PC-3 (cell line): ENCODE measurements at regions of chr13 and their contacts with region 1.

Region 1: GRCh38 chr13:48233046-48233907 is at the start of gene ITM2B:
- DNase-seq: peak; percentile 52
- ATAC-seq: peak; percentile 84
- H3K4me3 ChIP-seq: peak within 1 kb of the TSS; percentile 88
- H3K27ac ChIP-seq: peak within 1 kb of the TSS; percentile 32; the same call in 1 of the 2 replicates
- H3K4me1 ChIP-seq: peaks cover 32% of the 10 kb centered on the region
- H3K27me3 ChIP-seq: no peaks in the 10 kb centered on the region
- CTCF ChIP-seq: peak; percentile 45; the same call in 1 of the 2 replicates
- total RNA-seq, gene ITM2B: 74.6 and 105 TPM in 2 replicates

Region 2: DNA sequence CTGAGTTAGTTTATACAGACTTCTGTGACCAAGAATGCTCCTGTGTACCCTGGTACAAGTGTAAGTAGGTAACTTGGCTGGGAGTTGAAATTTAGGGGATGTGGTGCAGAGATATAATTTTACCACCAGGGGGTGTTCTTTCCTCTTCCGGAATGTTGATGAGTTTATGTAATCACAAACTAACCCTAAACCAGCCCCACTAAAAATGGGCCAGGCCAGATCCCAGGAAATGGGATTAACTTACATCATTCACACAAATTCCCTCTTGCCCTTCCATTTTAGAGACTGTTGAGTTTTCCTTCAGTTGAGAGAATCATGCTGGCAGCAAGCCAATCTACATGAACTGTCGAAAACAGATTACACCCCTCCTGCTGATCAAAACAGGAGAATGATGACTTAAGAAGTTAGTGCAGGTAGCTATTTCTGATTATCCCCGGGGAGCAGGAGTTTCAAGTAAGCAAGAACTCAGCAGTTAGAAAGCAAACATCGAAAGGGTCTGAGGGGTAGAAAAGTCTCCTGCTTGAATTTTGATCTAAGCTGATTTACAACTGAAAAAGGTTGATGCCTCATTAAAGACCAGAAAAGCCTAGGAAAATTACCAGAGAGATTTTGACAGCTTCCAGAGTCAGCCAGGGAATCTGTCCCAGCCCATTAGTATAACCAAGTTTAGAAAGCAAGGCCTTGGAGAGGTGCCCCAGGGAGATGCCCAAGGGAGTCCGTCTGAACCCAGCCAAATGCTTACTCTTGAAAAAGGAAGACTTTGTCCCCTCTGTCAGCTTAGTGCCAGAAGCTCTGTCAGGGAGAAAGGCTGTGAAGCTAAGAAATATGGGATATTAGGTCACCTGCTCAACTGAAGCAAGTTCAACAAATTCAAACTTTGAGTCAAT is 106.1 kb before region 1 on chr13:
- CTCF ChIA-PET with region 1: no interaction called
- POLR2A ChIA-PET with region 1: no interaction called
- intact Hi-C with region 1: loop called (anchors 2 kb)
- DNase-seq: peak; percentile 66
- ATAC-seq: peak; percentile 73
- H3K4me3 ChIP-seq: no peak overlapping the region
- H3K27ac ChIP-seq: no peak overlapping the region
- H3K4me1 ChIP-seq: no peaks in the 10 kb centered on the region
- H3K27me3 ChIP-seq: no peaks in the 10 kb centered on the region
- CTCF ChIP-seq: peak; percentile 68

Region 3: GRCh38 chr13:48148454-48148853 is 84.8 kb before region 1 on chr13:
- CTCF ChIA-PET with region 1: no interaction called
- POLR2A ChIA-PET with region 1: no interaction called
- intact Hi-C with region 1: no loop called
- DNase-seq: no peak
- ATAC-seq: no peak
- H3K4me3 ChIP-seq: no peak overlapping the region
- H3K27ac ChIP-seq: no peak overlapping the region
- H3K4me1 ChIP-seq: no peaks in the 10 kb centered on the region
- H3K27me3 ChIP-seq: no peaks in the 10 kb centered on the region
- CTCF ChIP-seq: no peak

Region 4: GRCh38 chr13:48181482-48182145 is 51.7 kb before region 1 on chr13:
- CTCF ChIA-PET with region 1: no interaction called
- POLR2A ChIA-PET with region 1: no interaction called
- intact Hi-C with region 1: no loop called
- DNase-seq: no peak
- ATAC-seq: no peak
- H3K4me3 ChIP-seq: no peak overlapping the region
- H3K27ac ChIP-seq: no peak overlapping the region
- H3K4me1 ChIP-seq: no peaks in the 10 kb centered on the region
- H3K27me3 ChIP-seq: no peaks in the 10 kb centered on the region
- CTCF ChIP-seq: no peak

Region 5: DNA sequence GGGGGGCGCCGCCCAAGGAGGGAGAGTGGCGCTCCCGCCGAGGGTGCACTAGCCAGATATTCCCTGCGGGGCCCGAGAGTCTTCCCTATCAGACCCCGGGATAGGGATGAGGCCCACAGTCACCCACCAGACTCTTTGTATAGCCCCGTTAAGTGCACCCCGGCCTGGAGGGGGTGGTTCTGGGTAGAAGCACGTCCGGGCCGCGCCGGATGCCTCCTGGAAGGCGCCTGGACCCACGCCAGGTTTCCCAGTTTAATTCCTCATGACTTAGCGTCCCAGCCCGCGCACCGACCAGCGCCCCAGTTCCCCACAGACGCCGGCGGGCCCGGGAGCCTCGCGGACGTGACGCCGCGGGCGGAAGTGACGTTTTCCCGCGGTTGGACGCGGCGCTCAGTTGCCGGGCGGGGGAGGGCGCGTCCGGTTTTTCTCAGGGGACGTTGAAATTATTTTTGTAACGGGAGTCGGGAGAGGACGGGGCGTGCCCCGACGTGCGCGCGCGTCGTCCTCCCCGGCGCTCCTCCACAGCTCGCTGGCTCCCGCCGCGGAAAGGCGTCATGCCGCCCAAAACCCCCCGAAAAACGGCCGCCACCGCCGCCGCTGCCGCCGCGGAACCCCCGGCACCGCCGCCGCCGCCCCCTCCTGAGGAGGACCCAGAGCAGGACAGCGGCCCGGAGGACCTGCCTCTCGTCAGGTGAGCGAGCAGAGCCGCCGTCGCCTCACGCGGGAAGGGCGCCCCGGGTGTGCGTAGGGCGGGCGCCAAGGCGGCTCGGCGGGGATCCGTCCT is 70.3 kb after region 1 on chr13 and contains the start of gene RB1:
- CTCF ChIA-PET with region 1: no interaction called
- POLR2A ChIA-PET with region 1: no interaction called
- intact Hi-C with region 1: loop called (anchors 5 kb)
- DNase-seq: peak; percentile 84
- ATAC-seq: peak; percentile 81
- H3K4me3 ChIP-seq: peak within 1 kb of the TSS; percentile 99
- H3K27ac ChIP-seq: peak within 1 kb of the TSS; percentile 85
- H3K4me1 ChIP-seq: peaks cover 10% of the 10 kb centered on the region
- H3K27me3 ChIP-seq: no peaks in the 10 kb centered on the region
- CTCF ChIP-seq: no peak
- total RNA-seq, gene RB1: 13.2 and 14.3 TPM in 2 replicates

Region 6: GRCh38 chr13:48448959-48449614 is 215.8 kb after region 1 on chr13:
- CTCF ChIA-PET with region 1: no interaction called
- POLR2A ChIA-PET with region 1: no interaction called
- intact Hi-C with region 1: no loop called
- DNase-seq: peak; percentile 78
- ATAC-seq: peak; percentile 29
- H3K4me3 ChIP-seq: peak overlapping the region; percentile 10; the same call in 1 of the 2 replicates
- H3K27ac ChIP-seq: peak overlapping the region; percentile 68
- H3K4me1 ChIP-seq: peaks cover 45% of the 10 kb centered on the region
- H3K27me3 ChIP-seq: no peaks in the 10 kb centered on the region
- CTCF ChIP-seq: no peak